ENCODE measurements at regions of chr7 and their contacts with region 1.

Region 1: GRCh38 chr7:21690705-21691104 is 147.9 kb downstream of the DNAH11 start:
- DNase-seq: no peak
- ATAC-seq: no peak
- H3K4me3 ChIP-seq: no peak overlapping the region
- H3K27ac ChIP-seq: no peak overlapping the region
- H3K4me1 ChIP-seq: no peaks in the 10 kb centered on the region
- H3K27me3 ChIP-seq: no peaks in the 10 kb centered on the region
- CTCF ChIP-seq: peak in 1 of 12 donors; percentile 15
- POLR2A ChIP-seq: no peak

Region 2: DNA sequence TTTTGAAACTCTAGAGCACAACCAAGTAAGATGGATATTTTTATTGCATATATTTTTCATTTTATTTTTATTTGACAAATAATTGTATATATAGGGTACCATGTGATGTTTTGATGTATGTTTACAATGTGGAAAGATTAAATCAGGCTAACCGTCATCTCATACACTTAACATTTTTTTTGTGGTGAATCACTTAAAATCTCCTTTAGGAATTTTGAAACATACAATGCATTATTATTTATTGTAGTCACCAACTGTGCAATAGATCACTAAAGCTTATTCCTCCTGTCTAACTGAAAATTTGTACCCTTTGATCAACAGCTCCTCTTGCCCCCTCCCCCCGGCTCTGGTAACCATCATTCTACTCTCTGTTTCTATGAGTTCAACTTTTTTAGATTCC is 70.7 kb before region 1 on chr7:
- intact Hi-C with region 1: loop called in 1 of 10 experiments (anchors 10 kb)
- DNase-seq: no peak
- ATAC-seq: no peak
- H3K4me3 ChIP-seq: no peak overlapping the region
- H3K27ac ChIP-seq: no peak overlapping the region
- H3K4me1 ChIP-seq: peaks cover 0 to 8% (median 0%) of the 10 kb centered on the region in 12 donors
- H3K27me3 ChIP-seq: no peaks in the 10 kb centered on the region
- CTCF ChIP-seq: no peak
- POLR2A ChIP-seq: no peak